Psoas muscle (tissue), 8 donors: ENCODE measurements at regions of chr17 and their contacts with region 1.

Region 1: DNA sequence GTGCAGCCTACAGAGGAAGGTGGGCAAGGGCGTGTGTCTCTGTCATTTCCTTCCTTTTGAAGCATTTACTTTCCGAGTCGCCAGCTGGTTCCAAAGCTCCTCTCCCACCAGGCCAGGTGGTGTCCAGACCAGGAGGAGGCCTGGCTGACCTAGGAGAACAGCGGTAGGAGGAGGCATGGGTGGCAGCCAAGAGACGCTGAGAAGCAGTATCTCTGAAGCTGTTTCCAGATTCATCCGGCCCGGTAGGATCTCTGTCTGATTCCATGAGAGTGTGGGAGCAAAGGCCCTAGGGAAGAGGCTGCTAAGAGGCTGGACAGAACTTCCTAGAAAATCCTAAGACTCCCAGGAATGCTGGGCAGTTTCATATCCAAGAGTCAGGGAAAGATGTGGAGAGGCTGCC is 20.3 kb downstream of the MEOX1 start:
- DNase-seq: no peak
- ATAC-seq: no peak
- H3K4me3 ChIP-seq: no peak overlapping the region
- H3K27ac ChIP-seq: no peak overlapping the region
- H3K4me1 ChIP-seq: no peaks in the 10 kb centered on the region
- H3K27me3 ChIP-seq: peaks cover 0 to 25% (median 3%) of the 10 kb centered on the region in 3 donors
- CTCF ChIP-seq: no peak

Region 2: GRCh38 chr17:43599835-43600234 is 41.6 kb before region 1 on chr17:
- intact Hi-C with region 1: loop called (anchors 5 kb)
- DNase-seq: no peak
- ATAC-seq: peak in 2 of 4 donors; percentile 32 to 41
- H3K4me3 ChIP-seq: no peak overlapping the region
- H3K27ac ChIP-seq: no peak overlapping the region
- H3K4me1 ChIP-seq: peaks cover 7% of the 10 kb centered on the region
- H3K27me3 ChIP-seq: peaks cover 0 to 1% (median 0%) of the 10 kb centered on the region in 3 donors
- CTCF ChIP-seq: no peak